CD14-positive monocyte (primary cell): ENCODE measurements at regions of chr18 and their contacts with region 1.

Region 1: DNA sequence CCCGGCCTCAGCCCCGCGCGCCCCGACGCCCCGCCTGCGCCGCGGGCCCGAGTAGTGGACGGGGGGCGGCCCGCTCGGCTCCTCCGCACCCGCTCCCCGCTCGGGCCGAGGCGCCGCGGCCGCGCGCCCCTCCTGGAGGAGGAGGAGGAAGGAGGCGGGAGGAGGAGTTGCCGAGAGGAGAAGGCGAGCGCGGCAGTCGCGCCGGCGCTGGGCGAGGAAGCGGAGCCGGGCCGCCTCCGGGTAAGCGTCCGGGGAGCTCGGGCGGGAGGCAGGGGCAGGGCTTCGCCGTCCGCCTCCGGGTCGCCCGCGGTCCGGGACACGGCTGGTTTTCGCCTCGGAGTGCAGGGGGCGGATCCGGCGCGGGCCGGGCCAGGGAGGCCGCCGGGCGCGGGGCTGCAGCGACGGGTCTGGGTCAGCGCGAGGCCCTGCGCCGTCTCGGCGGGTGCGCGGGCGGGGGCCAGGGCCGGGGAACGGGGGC is at the start of gene SOCS6:
- DNase-seq: peak; percentile 49 to 55 (median 52)
- H3K4me3 ChIP-seq: peak within 1 kb of the TSS; percentile 41 to 90 (median 80)
- H3K4me3 Mint-ChIP-seq: peak within 1 kb of the TSS; percentile 91 to 93
- H3K27ac ChIP-seq: peak within 1 kb of the TSS in 1 of 2 donors; percentile 54
- H3K27ac Mint-ChIP-seq: peak within 1 kb of the TSS; percentile 33 to 88 (median 79)
- H3K4me1 ChIP-seq: peaks cover 60 to 67% of the 10 kb centered on the region in 2 donors
- H3K4me1 Mint-ChIP-seq: peaks cover 68% of the 10 kb centered on the region
- H3K27me3 ChIP-seq: no peaks in the 10 kb centered on the region
- H3K27me3 Mint-ChIP-seq: peaks cover 0 to 11% (median 0%) of the 10 kb centered on the region in 3 donors
- CTCF ChIP-seq: no peak
- polyA plus RNA-seq, gene SOCS6: 4.8 to 6.1 (median 4.8) TPM

Region 2: DNA sequence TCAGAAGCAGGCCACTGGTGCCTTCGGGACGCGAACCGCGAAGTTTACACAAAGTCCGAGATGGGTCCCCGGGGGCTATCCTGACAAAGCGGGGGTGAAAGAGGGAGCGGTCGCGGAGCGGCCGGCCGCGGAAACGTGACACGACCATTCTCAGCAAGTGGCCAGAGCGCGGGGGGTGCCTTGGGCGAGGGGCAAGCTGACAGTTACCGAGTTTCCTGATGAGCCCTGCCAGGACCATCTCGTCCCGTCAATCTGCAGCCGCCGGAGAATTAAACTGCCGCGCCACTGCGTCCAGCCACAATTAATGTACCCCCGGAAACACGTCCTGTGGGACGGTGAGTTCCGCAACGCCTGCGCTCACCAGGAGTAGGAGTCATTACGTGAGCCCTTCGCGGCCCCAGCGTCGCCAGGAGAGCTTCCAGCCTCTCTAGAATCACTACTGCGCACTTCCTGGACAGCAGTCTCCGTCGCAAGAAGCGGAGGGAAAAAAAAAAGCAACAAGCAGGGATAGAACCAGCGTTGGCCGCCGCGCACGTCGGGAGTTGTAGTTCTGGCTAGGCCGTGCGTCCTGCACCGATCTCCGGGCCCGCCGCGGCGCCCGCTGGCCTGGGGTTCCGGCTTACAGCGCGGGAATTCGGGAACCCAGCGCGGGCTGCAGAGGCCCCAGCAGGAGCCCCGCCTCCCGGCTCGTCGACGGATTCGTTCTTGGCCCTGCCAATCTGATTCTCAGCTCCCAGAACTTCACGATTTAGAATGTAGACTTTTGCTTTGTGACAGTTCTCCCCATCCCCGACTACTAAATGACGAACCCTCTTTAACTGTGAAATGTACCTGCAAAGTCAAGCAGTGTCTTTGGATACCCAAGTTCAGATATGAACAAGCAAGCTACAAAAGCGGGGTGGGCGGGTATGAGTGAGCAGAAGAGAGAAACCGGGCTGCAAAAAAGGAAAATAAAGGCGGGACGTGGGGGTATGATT is 83.2 kb before region 1 on chr18 and contains the start of gene RTTN:
- intact Hi-C with region 1: loop called in 1 of 2 experiments (anchors 5 kb)
- DNase-seq: peak; percentile 83 to 91 (median 86)
- H3K4me3 ChIP-seq: peak within 1 kb of the TSS; percentile 69 to 86 (median 84)
- H3K4me3 Mint-ChIP-seq: peak within 1 kb of the TSS; percentile 89 to 98
- H3K27ac ChIP-seq: peak within 1 kb of the TSS; percentile 95 to 97
- H3K27ac Mint-ChIP-seq: peak within 1 kb of the TSS; percentile 98 to 100 (median 99)
- H3K4me1 ChIP-seq: peaks cover 10 to 17% of the 10 kb centered on the region in 2 donors
- H3K4me1 Mint-ChIP-seq: peaks cover 15% of the 10 kb centered on the region
- H3K27me3 ChIP-seq: no peaks in the 10 kb centered on the region
- H3K27me3 Mint-ChIP-seq: peaks cover 2 to 7% (median 3%) of the 10 kb centered on the region in 3 donors
- CTCF ChIP-seq: no peak
- polyA plus RNA-seq, gene RTTN: 0.22 to 2.7 (median 0.25) TPM

Region 3: DNA sequence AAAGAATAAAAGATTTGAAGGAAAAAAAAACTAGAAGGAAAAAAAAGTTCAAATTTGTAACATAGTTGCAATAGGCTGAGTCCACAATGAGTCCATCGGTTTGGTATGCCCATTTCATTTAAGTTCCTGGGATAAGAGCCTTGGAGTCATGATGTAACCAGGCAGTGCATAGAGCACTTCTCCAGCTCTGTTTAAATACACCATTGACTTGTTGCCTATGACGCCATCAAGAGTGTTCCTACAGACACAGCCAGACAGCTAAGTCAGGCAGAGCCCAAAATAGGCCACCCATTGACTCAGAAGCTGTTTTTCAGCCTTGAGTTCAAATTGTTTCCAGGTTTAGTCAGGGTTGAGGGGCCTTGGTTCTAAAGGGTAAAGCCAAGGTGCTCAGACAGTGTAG is 44.9 kb after region 1 on chr18:
- intact Hi-C with region 1: loop called in 1 of 2 experiments (anchors 5 kb)
- DNase-seq: no peak
- H3K4me3 ChIP-seq: no peak overlapping the region
- H3K4me3 Mint-ChIP-seq: no peak overlapping the region
- H3K27ac ChIP-seq: no peak overlapping the region
- H3K27ac Mint-ChIP-seq: no peak overlapping the region
- H3K4me1 ChIP-seq: peaks cover 3 to 6% of the 10 kb centered on the region in 2 donors
- H3K4me1 Mint-ChIP-seq: peaks cover 18% of the 10 kb centered on the region
- H3K27me3 ChIP-seq: no peaks in the 10 kb centered on the region
- H3K27me3 Mint-ChIP-seq: peaks cover 0 to 1% (median 0%) of the 10 kb centered on the region in 3 donors
- CTCF ChIP-seq: no peak

Region 4: DNA sequence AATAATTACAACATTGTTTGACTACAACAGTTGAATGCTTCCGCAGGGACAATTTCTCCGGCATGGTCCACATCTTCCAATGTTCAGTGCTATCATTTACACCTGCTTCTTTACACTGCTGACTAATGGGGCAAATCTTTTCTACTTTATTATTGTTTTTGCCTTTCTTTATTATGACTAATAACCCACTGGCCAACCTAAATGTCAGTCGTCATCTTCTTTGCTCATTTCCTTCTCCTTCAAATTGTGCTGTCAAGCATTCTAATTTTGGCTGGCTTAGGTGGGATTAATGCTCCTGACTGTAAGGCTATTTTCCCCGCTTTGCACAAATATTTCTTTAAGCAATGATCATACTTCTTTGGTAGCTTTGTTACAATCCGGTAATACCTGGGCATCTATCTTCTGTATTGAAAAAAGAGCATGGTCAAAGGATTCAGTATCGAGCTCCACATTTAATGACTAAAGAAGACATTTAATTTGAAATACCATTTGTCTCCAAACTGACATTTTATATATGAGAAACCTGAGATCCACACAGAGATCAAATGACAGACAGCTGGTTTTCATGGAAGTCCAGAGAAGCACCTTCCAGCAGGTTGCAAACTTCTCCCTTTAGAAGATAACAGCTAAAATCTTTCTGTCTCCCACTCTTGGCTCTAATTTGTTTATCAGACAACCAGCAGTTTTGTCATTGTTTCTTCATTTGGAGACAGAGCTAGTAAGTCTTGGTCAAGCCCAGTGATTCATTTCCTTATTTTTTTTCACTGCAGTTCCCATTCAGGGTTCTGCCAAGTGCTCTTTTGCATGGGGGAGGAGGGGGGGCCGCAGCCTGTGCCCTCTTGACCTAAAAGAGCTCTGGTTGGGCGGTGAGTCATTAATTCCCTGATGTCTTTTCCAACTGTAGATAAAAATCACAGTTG is 132.8 kb after region 1 on chr18:
- intact Hi-C with region 1: loop called in 1 of 2 experiments (anchors 2 kb)
- DNase-seq: peak; percentile 93 to 97 (median 97)
- H3K4me3 ChIP-seq: peak overlapping the region in 1 of 3 experiments; percentile 32
- H3K4me3 Mint-ChIP-seq: peak overlapping the region in 1 of 2 donors; percentile 46
- H3K27ac ChIP-seq: peak overlapping the region; percentile 40 to 95
- H3K27ac Mint-ChIP-seq: peak overlapping the region; percentile 92 to 99 (median 95)
- H3K4me1 ChIP-seq: peaks cover 42 to 44% of the 10 kb centered on the region in 2 donors
- H3K4me1 Mint-ChIP-seq: peaks cover 46% of the 10 kb centered on the region
- H3K27me3 ChIP-seq: no peaks in the 10 kb centered on the region
- H3K27me3 Mint-ChIP-seq: no peaks in the 10 kb centered on the region
- CTCF ChIP-seq: no peak

Region 5: GRCh38 chr18:70431203-70431624 is 142.3 kb after region 1 on chr18:
- intact Hi-C with region 1: loop called in 1 of 2 experiments (anchors 5 kb)
- DNase-seq: peak in 2 of 3 donors; percentile 44 to 51
- H3K4me3 ChIP-seq: no peak overlapping the region
- H3K4me3 Mint-ChIP-seq: no peak overlapping the region
- H3K27ac ChIP-seq: no peak overlapping the region
- H3K27ac Mint-ChIP-seq: peak overlapping the region in 3 of 7 donors; percentile 46 to 90 (median 81)
- H3K4me1 ChIP-seq: peaks cover 10 to 23% of the 10 kb centered on the region in 2 donors
- H3K4me1 Mint-ChIP-seq: peaks cover 23% of the 10 kb centered on the region
- H3K27me3 ChIP-seq: no peaks in the 10 kb centered on the region
- H3K27me3 Mint-ChIP-seq: no peaks in the 10 kb centered on the region
- CTCF ChIP-seq: no peak